ENCODE measurements at regions of chr3 and their contacts with region 1.

Region 1: DNA sequence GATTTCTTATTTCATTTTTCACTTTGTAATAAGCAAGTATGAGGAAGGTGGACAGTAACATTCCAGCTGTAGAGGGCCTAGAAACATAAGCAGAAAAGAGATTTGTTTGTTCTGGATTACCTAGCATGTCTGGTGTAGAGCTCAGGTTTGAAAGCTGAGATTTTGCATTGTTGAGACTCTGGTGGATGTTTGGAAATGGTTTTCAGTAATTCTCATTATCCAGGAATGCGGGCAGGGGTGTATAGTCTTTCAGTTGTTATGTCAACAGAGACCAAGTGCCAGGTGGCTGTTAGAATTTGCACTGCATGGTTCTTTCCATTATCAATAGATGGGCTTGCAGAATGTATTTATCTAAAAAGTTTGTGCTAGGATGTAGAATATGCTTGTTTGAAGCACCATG is 10.9 kb downstream of the GPD1L start:
- DNase-seq: no peak
- ATAC-seq: no peak
- H3K4me3 ChIP-seq: no peak overlapping the region
- H3K4me3 Mint-ChIP-seq: no peak overlapping the region
- H3K27ac ChIP-seq: no peak overlapping the region
- H3K27ac Mint-ChIP-seq: no peak overlapping the region
- H3K4me1 ChIP-seq: peaks cover 19% of the 10 kb centered on the region
- H3K4me1 Mint-ChIP-seq: peaks cover 74% of the 10 kb centered on the region
- H3K27me3 ChIP-seq: no peaks in the 10 kb centered on the region
- H3K27me3 Mint-ChIP-seq: no peaks in the 10 kb centered on the region
- CTCF ChIP-seq: no peak

Region 2: GRCh38 chr3:32106280-32106928 is 10.9 kb before region 1 on chr3 and contains the start of gene GPD1L:
- CTCF ChIA-PET with region 1: interaction called, 5 read pairs
- POLR2A ChIA-PET with region 1: interaction called, 28 read pairs
- intact Hi-C with region 1: no loop called
- DNase-seq: peak; percentile 76 to 96 (median 90)
- ATAC-seq: peak; percentile 97
- H3K4me3 ChIP-seq: peak within 1 kb of the TSS; percentile 80
- H3K4me3 Mint-ChIP-seq: peak within 1 kb of the TSS; percentile 97
- H3K27ac ChIP-seq: peak within 1 kb of the TSS; percentile 21 to 29
- H3K27ac Mint-ChIP-seq: peak within 1 kb of the TSS; percentile 66
- H3K4me1 ChIP-seq: peaks cover 39% of the 10 kb centered on the region
- H3K4me1 Mint-ChIP-seq: peaks cover 34% of the 10 kb centered on the region
- H3K27me3 ChIP-seq: no peaks in the 10 kb centered on the region
- H3K27me3 Mint-ChIP-seq: no peaks in the 10 kb centered on the region
- CTCF ChIP-seq: no peak
- total RNA-seq, gene GPD1L: 15.3 to 16.0 TPM

Region 3: DNA sequence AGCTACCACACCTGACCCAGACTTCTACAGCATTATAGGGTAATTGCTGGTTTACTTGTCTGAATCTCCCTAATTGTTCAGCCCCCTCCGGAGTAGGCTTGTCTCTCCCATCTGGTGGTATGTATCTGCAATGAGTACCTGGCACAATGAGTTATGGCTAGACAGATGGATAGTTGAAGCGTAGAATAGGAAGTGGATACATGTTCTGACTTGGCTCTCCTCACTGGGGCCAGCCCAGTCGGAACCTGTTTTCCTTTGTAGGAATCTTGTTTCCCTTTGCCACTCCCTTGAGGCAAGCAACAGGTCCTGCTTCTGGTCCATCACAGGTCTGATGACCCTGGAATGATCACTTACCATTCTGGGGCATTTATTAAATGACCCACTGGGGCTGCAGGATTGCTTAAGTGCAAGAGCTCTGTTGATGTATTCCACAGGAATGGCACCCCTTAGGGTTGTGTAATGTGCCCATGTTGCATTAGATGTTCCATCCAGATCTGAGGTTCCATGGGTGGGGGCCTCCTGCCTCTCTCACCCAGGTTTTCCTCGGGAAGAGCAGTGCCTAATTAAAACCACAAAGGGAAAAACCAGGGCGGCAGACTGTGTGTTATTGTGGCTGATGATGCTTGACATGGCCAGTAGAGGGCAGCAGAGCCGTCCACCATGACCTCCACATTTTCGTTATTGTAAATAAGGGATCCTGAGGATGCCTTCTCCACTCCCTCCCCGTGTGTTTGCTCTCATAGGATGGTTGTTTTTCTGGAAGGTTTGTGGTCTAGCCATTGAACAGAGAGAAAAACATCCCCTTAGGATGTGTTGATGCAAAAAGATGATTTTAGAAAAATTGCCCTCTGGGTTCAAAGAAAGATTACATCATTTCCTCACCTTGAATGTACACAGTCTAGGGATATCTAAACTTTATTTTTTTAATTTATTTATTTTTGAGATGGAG is 179.2 kb after region 1 on chr3:
- CTCF ChIA-PET with region 1: no interaction called
- POLR2A ChIA-PET with region 1: no interaction called
- intact Hi-C with region 1: no loop called
- DNase-seq: peak; percentile 52 to 88 (median 60)
- ATAC-seq: peak; percentile 62
- H3K4me3 ChIP-seq: no peak overlapping the region
- H3K4me3 Mint-ChIP-seq: peak overlapping the region; percentile 76
- H3K27ac ChIP-seq: peak overlapping the region; percentile 60
- H3K27ac Mint-ChIP-seq: peak overlapping the region; percentile 93
- H3K4me1 ChIP-seq: peaks cover 44% of the 10 kb centered on the region
- H3K4me1 Mint-ChIP-seq: peaks cover 43% of the 10 kb centered on the region
- H3K27me3 ChIP-seq: no peaks in the 10 kb centered on the region
- H3K27me3 Mint-ChIP-seq: no peaks in the 10 kb centered on the region
- CTCF ChIP-seq: peak; percentile 93

Region 4: DNA sequence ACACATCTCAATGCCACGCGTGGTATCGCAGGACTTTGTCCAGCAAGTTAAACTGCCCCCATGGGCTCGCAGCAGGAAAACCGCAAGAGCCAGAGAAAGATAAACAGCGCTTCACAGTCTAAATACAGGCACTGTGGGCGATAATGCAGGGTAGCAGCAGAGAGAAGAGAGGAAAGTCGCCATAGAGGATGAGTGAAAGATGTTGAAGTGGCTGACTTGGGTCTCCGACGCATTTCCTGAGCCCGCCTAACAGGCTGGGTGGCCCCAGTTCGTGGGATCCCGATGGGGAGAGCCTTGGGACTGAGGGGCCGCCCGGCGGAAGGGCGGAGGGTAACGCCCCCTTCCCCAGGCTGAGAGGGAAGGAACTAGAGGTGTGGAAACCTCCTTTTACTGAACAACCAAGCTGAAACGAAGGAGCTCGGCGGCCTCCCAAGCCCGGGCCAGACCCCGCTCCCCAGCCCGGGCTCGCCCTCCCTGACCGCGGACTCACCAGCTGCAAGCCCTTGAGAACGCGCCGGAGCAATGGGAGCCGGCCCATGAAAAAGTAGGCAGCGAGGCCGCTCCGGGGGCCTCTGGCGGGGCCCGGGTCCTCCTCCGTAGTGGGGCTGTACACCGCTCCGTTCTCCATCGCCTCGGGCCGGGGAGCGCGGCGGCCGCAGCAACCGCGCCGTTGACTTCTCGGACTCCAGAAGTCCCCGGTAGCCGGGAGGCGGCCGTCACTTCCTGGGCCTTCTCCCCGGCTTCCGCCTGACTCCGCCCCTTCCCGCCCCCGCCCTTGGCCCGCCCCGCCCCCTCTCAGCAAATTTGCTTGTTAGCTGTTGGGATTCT is 385.0 kb after region 1 on chr3 and contains the start of gene CMTM6:
- CTCF ChIA-PET with region 1: no interaction called
- POLR2A ChIA-PET with region 1: no interaction called
- intact Hi-C with region 1: loop called in 1 of 2 experiments (anchors 10 kb)
- DNase-seq: peak; percentile 54 to 90 (median 67)
- ATAC-seq: peak; percentile 78
- H3K4me3 ChIP-seq: peak within 1 kb of the TSS; percentile 79
- H3K4me3 Mint-ChIP-seq: peak within 1 kb of the TSS; percentile 92
- H3K27ac ChIP-seq: peak within 1 kb of the TSS; percentile 88 to 92
- H3K27ac Mint-ChIP-seq: peak within 1 kb of the TSS; percentile 83
- H3K4me1 ChIP-seq: peaks cover 15% of the 10 kb centered on the region
- H3K4me1 Mint-ChIP-seq: peaks cover 43% of the 10 kb centered on the region
- H3K27me3 ChIP-seq: no peaks in the 10 kb centered on the region
- H3K27me3 Mint-ChIP-seq: no peaks in the 10 kb centered on the region
- CTCF ChIP-seq: no peak
- total RNA-seq, gene CMTM6: 36.5 to 37.8 TPM

Measured in CD4-positive, alpha-beta T cell (primary cell).